Activated T-helper 1 cell treated with anti-CD3 and anti-CD28 coated beads, Interleukin-12 subunit alpha, Interleukin-12 subunit beta, Interleukin-2, Interleukin-4 antibody, amounts not matched to agents 30 ng/mL and 10 ng/mL and 1 ng/mL, durations not matched to agents 14 hours and 24 hours and 36 hours (primary cell): ENCODE measurements at regions of chr18 and their contacts with region 1.

Region 1: GRCh38 chr18:9082711-9083510 is 19.6 kb upstream of the NDUFV2 start:
- DNase-seq: peak; percentile 51
- H3K4me3 Mint-ChIP-seq: peak overlapping the region; percentile 75
- H3K27ac Mint-ChIP-seq: peak overlapping the region; percentile 98
- H3K4me1 Mint-ChIP-seq: peaks cover 50% of the 10 kb centered on the region
- H3K27me3 Mint-ChIP-seq: no peaks in the 10 kb centered on the region

Region 2: DNA sequence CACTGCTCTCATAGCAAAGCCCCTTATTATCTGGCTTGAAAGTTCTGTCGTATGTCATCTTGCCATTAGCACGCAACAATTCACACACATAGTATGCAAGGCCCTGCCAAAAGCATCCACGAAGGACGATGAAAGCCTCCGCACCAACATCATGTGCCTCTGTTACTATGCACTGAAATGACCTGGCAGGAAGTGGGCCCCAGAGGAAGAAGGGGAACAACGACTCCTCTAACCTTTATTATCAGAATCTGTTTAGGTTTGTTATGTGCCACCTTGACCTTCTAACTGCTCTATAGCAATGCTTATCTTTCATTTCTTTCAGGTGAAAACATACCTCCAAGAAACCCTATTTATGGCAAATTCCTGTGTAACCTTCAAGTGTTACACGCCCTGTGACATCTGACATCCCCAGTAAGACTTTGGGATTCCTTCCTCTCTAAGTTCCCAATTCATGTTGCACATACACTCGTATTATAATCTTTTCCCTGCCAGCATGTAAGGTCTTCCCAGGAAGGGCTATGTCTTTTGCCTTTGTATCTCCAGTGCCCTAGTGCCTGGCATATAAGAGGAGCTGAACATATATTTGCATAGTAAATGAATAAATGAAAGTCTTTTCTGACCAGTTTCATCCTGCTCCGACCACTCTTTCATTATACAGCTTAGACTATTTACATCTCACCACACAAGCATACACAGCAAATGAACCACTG is 12.5 kb after region 1 on chr18:
- intact Hi-C with region 1: loop called (anchors 1 kb)
- DNase-seq: peak; percentile 61
- H3K4me3 Mint-ChIP-seq: peak overlapping the region; percentile 66
- H3K27ac Mint-ChIP-seq: peak overlapping the region; percentile 100
- H3K4me1 Mint-ChIP-seq: peaks cover 71% of the 10 kb centered on the region
- H3K27me3 Mint-ChIP-seq: no peaks in the 10 kb centered on the region

Region 3: DNA sequence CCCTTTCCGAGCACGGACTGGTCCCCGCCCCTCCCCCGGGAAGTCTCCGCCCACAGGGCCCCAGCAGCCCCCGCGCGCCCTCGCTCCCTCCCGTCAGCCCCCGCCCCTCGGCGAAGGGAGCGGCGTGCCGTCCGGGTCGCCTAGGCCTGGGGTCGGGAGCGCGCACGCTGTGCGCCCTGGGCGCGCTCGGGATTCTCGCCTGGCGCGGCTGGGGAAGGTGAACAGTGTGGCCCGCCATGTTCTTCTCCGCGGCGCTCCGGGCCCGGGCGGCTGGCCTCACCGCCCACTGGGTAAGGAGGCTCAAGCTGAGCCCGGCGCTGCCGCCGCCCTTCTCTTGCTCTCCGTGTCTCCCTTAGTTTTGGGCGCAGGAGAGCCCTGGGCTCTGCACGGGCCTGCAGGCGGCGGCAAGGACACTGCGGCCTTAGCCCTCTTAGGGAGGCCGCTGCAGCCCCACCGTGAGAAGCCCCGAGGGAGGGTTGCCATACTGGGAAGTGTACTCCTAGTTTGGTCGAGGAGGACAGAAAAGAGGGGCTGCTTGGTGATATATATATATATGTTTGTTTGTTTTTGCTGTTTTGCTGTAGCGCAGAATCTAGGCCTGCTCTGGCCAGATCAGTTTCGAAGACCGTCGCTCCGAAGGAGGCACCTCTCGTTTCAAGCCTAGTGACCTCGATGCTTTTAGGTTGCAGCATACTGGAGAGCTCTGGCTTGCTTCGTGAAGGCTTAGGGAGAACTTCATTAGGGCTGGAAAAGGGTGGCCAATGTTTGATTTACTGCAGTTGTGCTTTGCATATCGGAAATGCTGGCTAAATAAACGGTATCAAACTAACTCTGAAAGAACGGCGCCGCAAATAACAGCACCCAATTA is 19.8 kb after region 1 on chr18 and contains the start of gene NDUFV2:
- intact Hi-C with region 1: loop called (anchors 1 kb)
- DNase-seq: peak; percentile 98
- H3K4me3 Mint-ChIP-seq: peak within 1 kb of the TSS; percentile 95
- H3K27ac Mint-ChIP-seq: peak within 1 kb of the TSS; percentile 98
- H3K4me1 Mint-ChIP-seq: peaks cover 63% of the 10 kb centered on the region
- H3K27me3 Mint-ChIP-seq: no peaks in the 10 kb centered on the region
- total RNA-seq, gene NDUFV2: 381 and 391 TPM in 2 replicates

Region 4: GRCh38 chr18:9474983-9475642 is 392.2 kb after region 1 on chr18 and contains the start of gene RALBP1:
- intact Hi-C with region 1: no loop called
- DNase-seq: peak; percentile 98
- H3K4me3 Mint-ChIP-seq: peak within 1 kb of the TSS; percentile 89
- H3K27ac Mint-ChIP-seq: peak within 1 kb of the TSS; percentile 95
- H3K4me1 Mint-ChIP-seq: peaks cover 30% of the 10 kb centered on the region
- H3K27me3 Mint-ChIP-seq: peaks cover 4% of the 10 kb centered on the region
- total RNA-seq, gene RALBP1: 40.9 and 42.4 TPM in 2 replicates